ENCODE measurements at regions of chr1 and their contacts with region 1.

Region 1: DNA sequence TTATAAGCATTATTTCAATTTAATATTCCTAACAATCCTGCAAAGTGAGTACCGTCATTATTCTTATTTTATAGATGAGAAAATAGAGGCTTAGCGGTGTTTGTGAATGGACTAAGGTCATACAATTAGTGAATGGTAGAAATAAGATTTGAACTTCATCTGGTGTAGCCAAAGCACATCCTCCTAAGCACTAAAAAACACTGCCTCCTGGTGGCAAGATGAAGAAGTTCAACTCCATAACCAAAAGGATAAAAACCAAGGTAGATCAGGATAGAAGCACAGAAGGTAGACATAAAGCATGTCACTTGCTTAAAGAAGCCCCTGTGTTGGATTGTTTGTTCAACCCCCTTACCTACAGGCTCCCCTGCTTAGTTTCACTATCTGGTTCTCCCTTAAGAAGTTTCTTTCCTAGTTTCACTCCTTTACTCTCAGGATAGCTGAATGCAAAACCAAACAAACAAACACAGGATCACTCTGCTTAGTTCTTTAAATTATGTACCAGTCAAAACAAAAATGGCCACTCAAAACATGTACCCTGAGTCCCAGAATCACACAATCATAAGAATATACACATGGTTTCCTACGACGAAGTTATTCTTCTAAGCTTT is 12.7 kb upstream of the AIM2 start:
- DNase-seq: peak in 5 of 9 donors; percentile 6 to 29 (median 23)
- ATAC-seq: no peak
- H3K4me3 ChIP-seq: no peak overlapping the region
- H3K4me3 Mint-ChIP-seq: no peak overlapping the region
- H3K27ac ChIP-seq: no peak overlapping the region
- H3K27ac Mint-ChIP-seq: peak overlapping the region in 1 of 9 donors; percentile 15
- H3K4me1 ChIP-seq: no peaks in the 10 kb centered on the region
- H3K4me1 Mint-ChIP-seq: peaks cover 0 to 46% (median 0%) of the 10 kb centered on the region in 7 donors
- H3K27me3 ChIP-seq: no peaks in the 10 kb centered on the region
- H3K27me3 Mint-ChIP-seq: no peaks in the 10 kb centered on the region

Region 2: DNA sequence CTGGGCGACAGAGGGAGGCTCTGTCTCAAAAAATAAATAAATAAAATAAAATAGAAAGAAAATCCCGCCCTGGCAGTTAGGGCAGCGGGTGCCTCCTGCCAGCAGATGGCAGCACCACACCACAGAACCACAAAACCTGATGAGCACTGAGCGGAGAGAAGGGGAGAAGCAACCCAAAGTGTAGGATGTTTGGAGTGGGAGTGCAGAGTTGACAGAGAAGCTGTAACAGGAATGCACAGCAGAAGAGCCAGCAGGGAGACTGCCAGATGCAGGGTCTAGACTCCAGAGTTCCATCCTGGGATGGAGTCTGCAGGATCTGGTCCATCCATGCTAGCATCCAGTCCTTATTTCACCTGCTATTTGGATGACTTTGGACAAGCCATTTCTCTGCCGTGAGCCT is 1125.6 kb before region 1 on chr1:
- CTCF ChIA-PET with region 1: no interaction called
- POLR2A ChIA-PET with region 1: no interaction called
- intact Hi-C with region 1: loop called in 1 of 2 experiments (anchors 1 kb)
- DNase-seq: peak in 7 of 9 donors; percentile 30 to 55 (median 41)
- ATAC-seq: peak; percentile 51
- H3K4me3 ChIP-seq: no peak overlapping the region
- H3K4me3 Mint-ChIP-seq: peak overlapping the region in 1 of 10 donors; percentile 59
- H3K27ac ChIP-seq: no peak overlapping the region
- H3K27ac Mint-ChIP-seq: no peak overlapping the region
- H3K4me1 ChIP-seq: no peaks in the 10 kb centered on the region
- H3K4me1 Mint-ChIP-seq: no peaks in the 10 kb centered on the region
- H3K27me3 ChIP-seq: no peaks in the 10 kb centered on the region
- H3K27me3 Mint-ChIP-seq: peaks cover 2 to 55% (median 24%) of the 10 kb centered on the region in 5 donors

Region 3: GRCh38 chr1:157992031-157992832 is 1097.1 kb before region 1 on chr1:
- CTCF ChIA-PET with region 1: no interaction called
- POLR2A ChIA-PET with region 1: no interaction called
- intact Hi-C with region 1: loop called in 1 of 2 experiments (anchors 5 kb)
- DNase-seq: peak in 5 of 9 donors; percentile 11 to 32 (median 29)
- ATAC-seq: peak; percentile 64
- H3K4me3 ChIP-seq: no peak overlapping the region
- H3K4me3 Mint-ChIP-seq: peak overlapping the region in 9 of 10 donors; percentile 21 to 84 (median 65)
- H3K27ac ChIP-seq: no peak overlapping the region
- H3K27ac Mint-ChIP-seq: no peak overlapping the region
- H3K4me1 ChIP-seq: no peaks in the 10 kb centered on the region
- H3K4me1 Mint-ChIP-seq: peaks cover 0 to 19% (median 11%) of the 10 kb centered on the region in 7 donors
- H3K27me3 ChIP-seq: no peaks in the 10 kb centered on the region
- H3K27me3 Mint-ChIP-seq: peaks cover 43 to 64% (median 52%) of the 10 kb centered on the region in 5 donors

Region 4: GRCh38 chr1:159077120-159077961 is 11.9 kb before region 1 on chr1:
- CTCF ChIA-PET with region 1: interaction called, 9 read pairs
- POLR2A ChIA-PET with region 1: no interaction called
- intact Hi-C with region 1: loop called in 1 of 2 experiments (anchors 1 kb)
- DNase-seq: peak in 2 of 9 donors; percentile 37 to 96
- ATAC-seq: peak; percentile 79
- H3K4me3 ChIP-seq: peak overlapping the region; percentile 38
- H3K4me3 Mint-ChIP-seq: peak overlapping the region in 3 of 10 donors; percentile 3 to 90 (median 38)
- H3K27ac ChIP-seq: peak overlapping the region; percentile 18
- H3K27ac Mint-ChIP-seq: peak overlapping the region in 3 of 9 donors; percentile 65 to 99 (median 65)
- H3K4me1 ChIP-seq: peaks cover 0 to 28% of the 10 kb centered on the region in 2 donors
- H3K4me1 Mint-ChIP-seq: peaks cover 0 to 40% (median 4%) of the 10 kb centered on the region in 7 donors
- H3K27me3 ChIP-seq: no peaks in the 10 kb centered on the region
- H3K27me3 Mint-ChIP-seq: peaks cover 0 to 3% (median 1%) of the 10 kb centered on the region in 5 donors